ENCODE measurements at regions of chr16 and their contacts with region 1.

Region 1: DNA sequence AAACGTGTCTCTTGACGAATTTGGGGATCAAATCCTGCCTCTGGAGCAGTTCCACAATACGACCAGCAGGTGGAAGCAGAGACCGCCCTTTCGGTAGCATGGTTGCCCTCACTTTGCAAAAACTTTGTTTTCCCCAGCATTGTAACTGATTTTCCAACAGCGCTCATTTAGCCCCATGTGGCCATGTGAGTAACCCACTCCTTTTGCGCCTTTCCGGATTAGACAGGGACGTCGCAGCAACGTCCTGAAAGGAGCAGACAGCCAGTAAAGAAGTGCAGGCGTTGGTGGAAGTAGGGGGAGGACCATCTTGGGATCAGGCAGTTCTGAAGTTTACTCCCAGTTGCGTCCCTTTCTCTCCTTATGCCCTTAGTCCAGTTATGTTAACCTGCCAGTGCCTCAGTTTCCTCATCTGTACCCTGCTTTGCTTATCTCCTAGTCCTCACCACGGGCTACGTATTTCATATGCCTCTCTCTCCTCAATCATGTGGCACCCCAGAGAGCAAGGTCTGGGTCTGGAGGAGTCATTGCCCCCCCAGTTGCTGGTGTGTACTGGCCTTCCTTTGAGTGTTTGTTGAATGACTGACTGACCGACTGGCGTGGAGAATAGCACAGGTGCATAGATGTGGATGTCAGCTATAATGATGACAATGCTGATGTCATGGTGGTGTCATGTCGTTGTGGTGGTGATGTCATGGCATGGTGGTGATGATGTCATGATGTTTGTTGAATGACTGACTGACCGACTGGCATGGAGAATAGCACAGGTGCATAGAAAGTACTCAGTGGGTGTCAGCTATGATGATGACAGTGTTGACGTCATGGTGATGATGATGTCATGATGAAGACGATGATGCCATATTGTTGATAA is 22.3 kb downstream of the TMEM114 start:
- DNase-seq: peak; percentile 53 to 86 (median 79)
- ATAC-seq: peak; percentile 97
- H3K4me3 ChIP-seq: no peak overlapping the region
- H3K4me3 Mint-ChIP-seq: no peak overlapping the region
- H3K27ac ChIP-seq: no peak overlapping the region
- H3K27ac Mint-ChIP-seq: peak overlapping the region in 7 of 9 donors; percentile 10 to 69 (median 60)
- H3K4me1 ChIP-seq: no peaks in the 10 kb centered on the region
- H3K4me1 Mint-ChIP-seq: peaks cover 0 to 8% (median 4%) of the 10 kb centered on the region in 7 donors
- H3K27me3 ChIP-seq: no peaks in the 10 kb centered on the region
- H3K27me3 Mint-ChIP-seq: peaks cover 4 to 19% (median 11%) of the 10 kb centered on the region in 5 donors

Region 2: GRCh38 chr16:8278181-8278580 is 289.8 kb before region 1 on chr16:
- CTCF ChIA-PET with region 1: no interaction called
- POLR2A ChIA-PET with region 1: no interaction called
- intact Hi-C with region 1: no loop called
- DNase-seq: no peak
- ATAC-seq: no peak
- H3K4me3 ChIP-seq: no peak overlapping the region
- H3K4me3 Mint-ChIP-seq: no peak overlapping the region
- H3K27ac ChIP-seq: no peak overlapping the region
- H3K27ac Mint-ChIP-seq: no peak overlapping the region
- H3K4me1 ChIP-seq: no peaks in the 10 kb centered on the region
- H3K4me1 Mint-ChIP-seq: no peaks in the 10 kb centered on the region
- H3K27me3 ChIP-seq: no peaks in the 10 kb centered on the region
- H3K27me3 Mint-ChIP-seq: peaks cover 0 to 6% (median 5%) of the 10 kb centered on the region in 5 donors

Region 3: GRCh38 chr16:8581831-8582580 is 14.0 kb after region 1 on chr16:
- CTCF ChIA-PET with region 1: no interaction called
- POLR2A ChIA-PET with region 1: no interaction called
- intact Hi-C with region 1: no loop called
- DNase-seq: no peak
- ATAC-seq: peak; percentile 18
- H3K4me3 ChIP-seq: no peak overlapping the region
- H3K4me3 Mint-ChIP-seq: no peak overlapping the region
- H3K27ac ChIP-seq: no peak overlapping the region
- H3K27ac Mint-ChIP-seq: peak overlapping the region in 1 of 9 donors; percentile 46
- H3K4me1 ChIP-seq: no peaks in the 10 kb centered on the region
- H3K4me1 Mint-ChIP-seq: peaks cover 0 to 3% (median 0%) of the 10 kb centered on the region in 7 donors
- H3K27me3 ChIP-seq: no peaks in the 10 kb centered on the region
- H3K27me3 Mint-ChIP-seq: peaks cover 6 to 39% (median 25%) of the 10 kb centered on the region in 5 donors

Region 4: GRCh38 chr16:8644211-8645140 is 76.5 kb after region 1 on chr16:
- CTCF ChIA-PET with region 1: interaction called, 4 read pairs
- POLR2A ChIA-PET with region 1: no interaction called
- intact Hi-C with region 1: loop called (anchors 1 to 2 kb)
- DNase-seq: peak in 6 of 9 donors; percentile 18 to 29 (median 24)
- ATAC-seq: peak; percentile 83
- H3K4me3 ChIP-seq: no peak overlapping the region
- H3K4me3 Mint-ChIP-seq: peak overlapping the region in 4 of 10 donors; percentile 8 to 56 (median 18)
- H3K27ac ChIP-seq: no peak overlapping the region
- H3K27ac Mint-ChIP-seq: peak overlapping the region; percentile 40 to 88 (median 80)
- H3K4me1 ChIP-seq: peaks cover 3 to 8% of the 10 kb centered on the region in 2 donors
- H3K4me1 Mint-ChIP-seq: peaks cover 8 to 25% (median 16%) of the 10 kb centered on the region in 7 donors
- H3K27me3 ChIP-seq: no peaks in the 10 kb centered on the region
- H3K27me3 Mint-ChIP-seq: no peaks in the 10 kb centered on the region

Region 5: DNA sequence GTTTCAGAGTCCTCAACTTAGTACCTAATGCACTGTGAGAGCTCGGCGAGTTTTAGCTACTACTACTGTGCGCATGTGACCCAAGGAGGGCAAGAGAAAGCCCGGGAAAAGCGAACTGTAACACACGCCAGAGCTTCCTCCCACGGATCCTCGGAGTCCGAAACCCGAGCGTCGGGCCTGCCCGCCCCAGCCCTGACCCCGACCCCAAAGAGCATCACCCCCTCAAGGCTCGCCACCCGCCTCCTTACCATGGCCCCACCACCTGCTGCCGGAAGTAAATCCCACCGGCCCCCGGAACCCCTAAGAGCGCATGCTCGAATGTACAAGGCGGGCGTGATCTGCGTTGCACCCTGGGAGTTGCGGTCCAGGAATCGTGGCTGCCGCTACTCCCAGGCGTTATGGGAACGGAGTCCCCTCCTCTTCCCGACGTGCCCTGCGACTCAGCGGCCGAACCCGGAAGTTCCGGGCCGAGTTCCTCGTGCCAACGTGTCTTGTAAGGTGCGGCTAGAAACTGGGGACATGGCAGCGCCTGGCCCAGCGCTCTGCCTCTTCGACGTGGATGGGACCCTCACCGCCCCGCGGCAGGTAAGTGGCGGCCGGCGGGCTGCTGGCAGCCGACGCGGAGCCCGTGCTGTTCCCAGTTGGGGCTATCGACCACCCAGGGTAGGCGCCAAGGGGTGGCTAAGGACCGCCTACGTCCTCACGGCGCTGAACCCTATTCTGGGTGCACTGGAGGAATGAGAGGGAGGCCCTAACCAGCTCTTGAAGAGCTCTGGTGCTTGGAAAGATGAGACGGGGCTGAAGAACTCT is 229.6 kb after region 1 on chr16 and contains the starts of genes PMM2 and TMEM186:
- CTCF ChIA-PET with region 1: no interaction called
- POLR2A ChIA-PET with region 1: no interaction called
- intact Hi-C with region 1: loop called (anchors 1 kb)
- DNase-seq: peak; percentile 78 to 96 (median 93)
- ATAC-seq: peak; percentile 99
- H3K4me3 ChIP-seq: peak within 1 kb of the TSS; percentile 90
- H3K4me3 Mint-ChIP-seq: peak within 1 kb of the TSS; percentile 91 to 99 (median 96)
- H3K27ac ChIP-seq: peak within 1 kb of the TSS; percentile 86
- H3K27ac Mint-ChIP-seq: peak within 1 kb of the TSS; percentile 87 to 95 (median 92)
- H3K4me1 ChIP-seq: peaks cover 25 to 32% of the 10 kb centered on the region in 2 donors
- H3K4me1 Mint-ChIP-seq: peaks cover 19 to 71% (median 49%) of the 10 kb centered on the region in 7 donors
- H3K27me3 ChIP-seq: no peaks in the 10 kb centered on the region
- H3K27me3 Mint-ChIP-seq: no peaks in the 10 kb centered on the region
- total RNA-seq, gene PMM2: 32.2 to 52.8 (median 41.7) TPM
- total RNA-seq, gene TMEM186: 3.2 to 16.3 (median 11.3) TPM

Region 6: DNA sequence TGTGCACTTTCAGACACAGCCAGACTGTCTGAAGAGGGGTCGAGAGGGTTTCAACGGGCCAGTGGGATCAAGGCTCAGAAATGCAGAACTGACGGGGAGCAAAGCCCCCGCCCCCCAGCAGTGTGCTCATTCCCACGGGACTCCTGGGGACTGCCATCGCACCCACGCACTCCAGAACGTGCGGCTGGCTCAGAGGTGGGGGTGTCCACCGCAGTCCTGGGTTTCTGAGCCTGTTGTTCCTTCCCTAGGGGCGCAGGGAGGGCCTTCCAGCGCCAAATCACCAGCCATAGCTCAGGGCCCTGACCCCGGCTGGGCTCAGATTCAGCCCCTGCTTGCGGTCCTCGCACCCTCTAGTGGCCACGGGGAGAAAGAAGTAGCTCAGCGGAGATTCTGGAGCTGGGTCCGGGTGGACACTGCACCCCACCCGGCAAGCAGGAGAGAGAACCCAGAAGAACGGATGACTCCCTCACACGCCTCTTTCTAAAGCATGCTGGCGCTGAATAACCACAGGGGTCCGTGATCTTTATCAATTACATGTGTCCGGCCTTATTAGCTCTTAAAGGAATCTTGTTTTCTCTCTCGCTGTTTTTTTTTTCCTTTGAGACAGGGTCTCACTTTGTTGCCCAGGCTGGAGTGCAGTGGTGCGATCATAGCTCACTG is 440.7 kb after region 1 on chr16:
- CTCF ChIA-PET with region 1: interaction called, 4 read pairs
- POLR2A ChIA-PET with region 1: no interaction called
- intact Hi-C with region 1: loop called (anchors 1 kb)
- DNase-seq: peak; percentile 30 to 66 (median 57)
- ATAC-seq: peak; percentile 93
- H3K4me3 ChIP-seq: no peak overlapping the region
- H3K4me3 Mint-ChIP-seq: peak overlapping the region in 4 of 10 donors; percentile 49 to 67 (median 58)
- H3K27ac ChIP-seq: no peak overlapping the region
- H3K27ac Mint-ChIP-seq: no peak overlapping the region
- H3K4me1 ChIP-seq: peaks cover 0 to 6% of the 10 kb centered on the region in 2 donors
- H3K4me1 Mint-ChIP-seq: peaks cover 0 to 4% (median 3%) of the 10 kb centered on the region in 7 donors
- H3K27me3 ChIP-seq: no peaks in the 10 kb centered on the region
- H3K27me3 Mint-ChIP-seq: peaks cover 4 to 19% (median 8%) of the 10 kb centered on the region in 5 donors

Region 7: DNA sequence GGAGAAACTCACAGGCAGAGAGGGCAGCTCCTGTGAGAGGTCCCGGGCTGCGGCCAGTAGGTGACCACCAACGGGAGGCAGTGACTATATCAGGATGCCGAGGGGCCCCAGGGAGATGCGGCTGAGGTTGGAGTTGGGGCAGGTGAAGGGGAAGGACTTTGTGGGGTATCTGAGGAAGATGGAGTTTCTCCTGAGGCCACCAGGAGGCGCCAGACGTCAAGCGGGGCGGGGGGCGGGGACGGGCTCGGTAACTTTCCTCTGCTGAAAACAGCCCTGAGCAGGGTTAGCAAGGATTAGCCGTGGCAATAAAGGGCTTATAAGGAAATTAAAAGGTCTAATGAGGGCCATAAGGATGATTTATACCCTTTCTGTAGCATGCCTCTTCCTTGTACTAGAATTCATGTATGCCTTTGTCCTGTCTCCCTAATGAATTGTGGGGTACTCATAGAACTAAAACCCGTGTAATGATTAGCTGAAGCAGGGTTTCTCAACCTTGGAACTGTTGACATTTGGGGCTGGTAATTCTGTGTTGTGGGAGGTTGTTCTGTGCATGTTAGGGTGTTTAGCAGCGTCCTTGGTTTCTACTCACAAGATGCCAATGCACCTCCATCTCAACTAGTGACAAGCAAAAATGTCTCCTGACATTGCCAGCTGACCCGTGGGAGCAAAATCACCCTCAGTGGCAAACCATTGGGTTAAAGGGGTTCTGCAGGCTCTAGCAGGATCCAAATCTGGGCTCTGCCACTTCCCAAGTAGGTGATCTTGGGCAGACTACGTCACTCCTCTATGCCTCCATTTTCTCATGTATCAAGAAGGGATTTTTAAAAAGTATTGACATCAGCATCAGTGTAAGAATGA is 1689.0 kb after region 1 on chr16:
- CTCF ChIA-PET with region 1: no interaction called
- POLR2A ChIA-PET with region 1: no interaction called
- intact Hi-C with region 1: loop called in 1 of 2 experiments (anchors 5 kb)
- DNase-seq: peak; percentile 10 to 52 (median 30)
- ATAC-seq: peak; percentile 74
- H3K4me3 ChIP-seq: no peak overlapping the region
- H3K4me3 Mint-ChIP-seq: peak overlapping the region in 1 of 10 donors; percentile 29
- H3K27ac ChIP-seq: no peak overlapping the region
- H3K27ac Mint-ChIP-seq: peak overlapping the region in 2 of 9 donors; percentile 55 to 56
- H3K4me1 ChIP-seq: no peaks in the 10 kb centered on the region
- H3K4me1 Mint-ChIP-seq: peaks cover 0 to 5% (median 3%) of the 10 kb centered on the region in 7 donors
- H3K27me3 ChIP-seq: no peaks in the 10 kb centered on the region
- H3K27me3 Mint-ChIP-seq: peaks cover 1 to 11% (median 7%) of the 10 kb centered on the region in 5 donors